Mucosa of descending colon (tissue), 3 donors: ENCODE measurements at regions of chr10 and their contacts with region 1.

Region 1: DNA sequence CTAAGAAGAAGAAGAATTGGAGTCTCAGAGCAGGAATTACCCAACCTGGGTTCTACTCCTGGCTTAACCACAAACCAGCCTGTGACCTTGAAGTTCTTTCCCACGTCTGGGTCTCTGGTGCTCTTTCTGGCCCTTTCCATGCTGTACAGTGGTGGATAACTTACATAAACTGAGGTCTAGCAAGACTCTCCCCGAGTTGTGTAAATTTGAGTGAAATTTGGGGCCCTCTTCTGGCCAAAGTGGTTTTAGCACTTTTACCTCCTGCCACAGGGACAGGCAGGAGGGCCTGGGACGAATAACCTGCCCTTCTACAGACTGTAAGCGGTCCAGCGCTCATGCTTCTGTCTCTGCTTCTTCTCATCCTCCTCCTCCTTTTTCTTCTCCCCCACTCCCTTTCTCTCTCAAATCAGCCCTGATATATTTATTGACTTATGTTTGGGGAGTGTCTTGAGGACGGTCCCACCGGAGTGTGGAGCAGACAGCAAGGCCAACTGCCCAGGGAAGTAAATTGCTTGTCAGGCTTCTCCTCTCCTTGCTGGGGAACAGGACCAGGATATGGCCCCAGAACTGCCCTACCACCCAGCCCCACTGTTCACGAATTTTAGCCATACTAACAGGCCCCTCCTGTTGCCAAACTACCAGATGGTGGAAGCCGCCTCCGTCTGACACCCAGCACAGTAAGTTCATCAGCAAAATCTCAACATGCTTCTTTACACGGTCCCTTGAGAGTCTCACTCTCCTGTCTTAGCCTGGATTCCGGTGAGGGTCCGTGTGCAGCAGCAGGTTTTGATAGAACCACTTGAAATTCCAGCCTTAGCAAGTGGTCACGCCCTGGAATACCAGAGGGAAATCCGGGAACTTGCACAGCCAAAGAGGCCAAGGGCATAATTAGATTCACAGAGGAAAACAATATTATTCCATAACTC is 4.0 kb upstream of the SH3PXD2A start:
- DNase-seq: peak in 1 of 3 donors; percentile 90
- ATAC-seq: peak; percentile 65
- H3K4me3 ChIP-seq: no peak overlapping the region
- H3K4me1 ChIP-seq: peaks cover 4% of the 10 kb centered on the region
- CTCF ChIP-seq: peak; percentile 29

Region 2: DNA sequence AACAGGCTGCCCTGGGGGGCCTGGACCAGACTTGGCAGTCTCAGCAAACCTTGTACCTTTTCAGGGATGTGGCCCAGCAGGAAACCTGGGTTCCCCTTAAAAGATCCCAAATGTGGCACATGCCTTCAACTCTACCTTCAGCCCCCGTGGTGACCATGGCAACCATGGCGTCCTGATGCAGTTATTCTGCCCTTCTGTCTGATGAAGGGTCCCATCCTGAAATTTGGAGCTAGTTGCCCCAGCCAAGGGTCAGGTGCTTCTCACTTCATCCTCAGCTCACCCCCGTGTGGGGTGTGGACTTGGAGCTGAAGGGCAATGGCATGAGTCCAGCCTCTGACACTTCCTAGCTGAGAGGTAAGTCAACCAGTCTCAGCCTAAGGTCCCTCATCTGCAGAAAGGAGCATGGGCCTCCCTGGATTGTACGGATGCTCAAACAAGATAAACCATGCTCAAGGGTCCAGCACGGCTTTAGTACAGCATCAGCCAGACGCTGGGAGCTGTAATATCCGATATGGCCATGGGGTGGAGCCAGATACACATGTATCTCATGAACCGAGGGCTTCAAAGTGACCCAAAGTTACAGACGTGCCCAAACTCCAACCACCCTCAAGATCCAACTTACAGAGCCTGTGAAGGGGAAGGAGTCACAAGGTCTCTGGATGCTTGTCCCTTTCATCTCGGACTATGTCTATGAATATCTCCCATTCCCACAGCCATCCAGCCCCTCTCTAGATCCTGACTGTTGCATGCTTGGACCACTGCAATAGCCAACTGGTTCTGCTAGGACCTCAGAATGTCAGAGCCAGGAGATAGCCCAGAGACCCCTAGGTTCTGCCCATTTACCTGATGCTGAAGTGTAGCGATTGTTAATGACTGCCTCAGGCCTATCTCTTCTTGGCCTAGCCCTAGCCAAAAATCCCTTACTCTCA is 146.6 kb before region 1 on chr10:
- intact Hi-C with region 1: loop called (anchors 2 to 5 kb)
- DNase-seq: peak in 2 of 3 donors; percentile 83 to 96
- ATAC-seq: peak; percentile 78
- H3K4me3 ChIP-seq: no peak overlapping the region
- H3K4me1 ChIP-seq: no peaks in the 10 kb centered on the region
- CTCF ChIP-seq: peak; percentile 79